Testis (tissue), 5 donors: ENCODE measurements at regions of chr9 and their contacts with region 1.

Region 1: GRCh38 chr9:98263482-98264357 is 8.3 kb upstream of the TBC1D2 start:
- DNase-seq: peak; percentile 85
- H3K4me3 ChIP-seq: no peak overlapping the region
- H3K27ac ChIP-seq: no peak overlapping the region
- H3K4me1 ChIP-seq: no peaks in the 10 kb centered on the region
- H3K27me3 ChIP-seq: no peaks in the 10 kb centered on the region
- CTCF ChIP-seq: peak; percentile 61 to 69 (median 67)
- POLR2A ChIP-seq: no peak

Region 2: DNA sequence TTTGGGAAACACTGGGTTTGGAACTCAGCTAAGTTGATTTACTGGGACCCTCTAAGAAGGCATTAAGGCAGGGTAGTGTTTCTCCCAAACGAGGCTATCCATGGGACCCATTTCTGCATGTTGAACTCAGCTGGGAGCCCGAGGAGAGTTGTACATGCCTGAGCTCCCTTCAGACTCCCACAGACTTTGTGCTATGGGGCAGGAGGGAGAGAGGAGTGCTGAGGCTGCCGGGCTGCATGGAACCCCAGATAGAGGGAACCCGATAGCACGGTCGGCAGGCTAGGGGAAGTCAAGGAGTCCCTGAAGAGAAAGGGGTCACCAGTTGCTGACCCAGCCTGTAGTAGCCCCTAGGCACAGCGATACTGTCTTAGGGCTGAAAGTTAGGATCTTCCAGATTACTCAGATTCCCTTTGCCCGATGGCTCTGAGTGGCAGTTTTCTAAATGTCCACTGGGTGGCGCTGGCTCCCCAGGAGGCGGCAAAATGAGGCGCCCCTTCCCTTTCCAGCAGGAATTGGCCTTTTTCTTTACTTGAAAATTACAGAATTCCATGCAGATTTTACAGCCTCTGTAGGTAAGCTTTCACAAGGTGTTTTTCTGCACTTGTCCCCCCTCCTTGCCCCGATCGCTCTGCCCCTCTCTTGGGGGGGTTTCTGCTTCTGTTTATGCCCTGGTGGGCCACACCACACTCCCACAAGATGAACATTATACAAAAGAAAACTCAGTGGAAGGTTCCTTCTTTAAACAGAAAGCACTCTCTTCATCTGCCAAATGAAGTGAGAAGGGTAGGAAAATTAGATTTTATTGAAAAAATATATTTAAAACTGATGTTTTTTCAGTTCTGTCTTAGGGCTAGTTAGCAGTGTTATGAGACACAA is 189.4 kb before region 1 on chr9:
- intact Hi-C with region 1: loop called (anchors 5 kb)
- DNase-seq: peak; percentile 72
- H3K4me3 ChIP-seq: no peak overlapping the region
- H3K27ac ChIP-seq: no peak overlapping the region
- H3K4me1 ChIP-seq: peaks cover 5% of the 10 kb centered on the region
- H3K27me3 ChIP-seq: no peaks in the 10 kb centered on the region
- CTCF ChIP-seq: peak; percentile 51 to 97 (median 89)
- POLR2A ChIP-seq: no peak